CD4-positive, alpha-beta T cell (primary cell): ENCODE measurements at regions of chr2 and their contacts with region 1.

Region 1: GRCh38 chr2:88669371-88670214 is 21.9 kb upstream of the RPIA start:
- DNase-seq: peak in 5 of 14 experiments; percentile 7 to 51 (median 36)
- ATAC-seq: peak; percentile 55
- H3K4me3 ChIP-seq: no peak overlapping the region
- H3K4me3 Mint-ChIP-seq: no peak overlapping the region
- H3K27ac ChIP-seq: no peak overlapping the region
- H3K27ac Mint-ChIP-seq: no peak overlapping the region
- H3K4me1 ChIP-seq: no peaks in the 10 kb centered on the region
- H3K4me1 Mint-ChIP-seq: no peaks in the 10 kb centered on the region
- H3K27me3 ChIP-seq: no peaks in the 10 kb centered on the region
- H3K27me3 Mint-ChIP-seq: no peaks in the 10 kb centered on the region
- CTCF ChIP-seq: peak; percentile 48

Region 2: GRCh38 chr2:88590998-88591613 is 78.5 kb before region 1 on chr2:
- CTCF ChIA-PET with region 1: interaction called, 14 read pairs
- POLR2A ChIA-PET with region 1: no interaction called
- intact Hi-C with region 1: loop called (anchors 1 kb)
- DNase-seq: peak in 8 of 14 experiments; percentile 8 to 72 (median 46)
- ATAC-seq: peak; percentile 76
- H3K4me3 ChIP-seq: no peak overlapping the region
- H3K4me3 Mint-ChIP-seq: no peak overlapping the region
- H3K27ac ChIP-seq: no peak overlapping the region
- H3K27ac Mint-ChIP-seq: no peak overlapping the region
- H3K4me1 ChIP-seq: no peaks in the 10 kb centered on the region
- H3K4me1 Mint-ChIP-seq: peaks cover 4% of the 10 kb centered on the region
- H3K27me3 ChIP-seq: no peaks in the 10 kb centered on the region
- H3K27me3 Mint-ChIP-seq: no peaks in the 10 kb centered on the region
- CTCF ChIP-seq: peak; percentile 80

Region 3: DNA sequence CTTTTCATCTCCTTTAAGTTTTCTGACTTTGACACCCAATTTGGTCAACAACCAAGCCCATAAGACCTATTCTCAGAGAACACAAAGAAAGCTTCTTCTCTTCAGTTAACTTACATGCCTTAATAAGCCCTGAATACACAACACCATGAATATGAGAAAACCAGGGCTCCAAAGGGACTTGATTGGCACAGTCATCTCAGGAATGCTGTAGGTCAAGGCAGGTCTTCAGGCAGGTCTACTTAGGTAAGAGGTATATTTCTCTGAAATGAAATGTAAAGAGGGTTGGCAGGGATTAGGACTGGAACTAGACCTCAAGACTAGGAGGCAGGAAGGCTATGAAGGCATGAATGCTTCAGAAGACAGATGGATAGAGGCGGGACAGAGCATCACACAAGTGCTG is 17.9 kb before region 1 on chr2:
- CTCF ChIA-PET with region 1: interaction called, 11 read pairs
- POLR2A ChIA-PET with region 1: no interaction called
- intact Hi-C with region 1: no loop called
- DNase-seq: no peak
- ATAC-seq: no peak
- H3K4me3 ChIP-seq: no peak overlapping the region
- H3K4me3 Mint-ChIP-seq: no peak overlapping the region
- H3K27ac ChIP-seq: no peak overlapping the region
- H3K27ac Mint-ChIP-seq: no peak overlapping the region
- H3K4me1 ChIP-seq: no peaks in the 10 kb centered on the region
- H3K4me1 Mint-ChIP-seq: no peaks in the 10 kb centered on the region
- H3K27me3 ChIP-seq: no peaks in the 10 kb centered on the region
- H3K27me3 Mint-ChIP-seq: no peaks in the 10 kb centered on the region
- CTCF ChIP-seq: no peak

Region 4: DNA sequence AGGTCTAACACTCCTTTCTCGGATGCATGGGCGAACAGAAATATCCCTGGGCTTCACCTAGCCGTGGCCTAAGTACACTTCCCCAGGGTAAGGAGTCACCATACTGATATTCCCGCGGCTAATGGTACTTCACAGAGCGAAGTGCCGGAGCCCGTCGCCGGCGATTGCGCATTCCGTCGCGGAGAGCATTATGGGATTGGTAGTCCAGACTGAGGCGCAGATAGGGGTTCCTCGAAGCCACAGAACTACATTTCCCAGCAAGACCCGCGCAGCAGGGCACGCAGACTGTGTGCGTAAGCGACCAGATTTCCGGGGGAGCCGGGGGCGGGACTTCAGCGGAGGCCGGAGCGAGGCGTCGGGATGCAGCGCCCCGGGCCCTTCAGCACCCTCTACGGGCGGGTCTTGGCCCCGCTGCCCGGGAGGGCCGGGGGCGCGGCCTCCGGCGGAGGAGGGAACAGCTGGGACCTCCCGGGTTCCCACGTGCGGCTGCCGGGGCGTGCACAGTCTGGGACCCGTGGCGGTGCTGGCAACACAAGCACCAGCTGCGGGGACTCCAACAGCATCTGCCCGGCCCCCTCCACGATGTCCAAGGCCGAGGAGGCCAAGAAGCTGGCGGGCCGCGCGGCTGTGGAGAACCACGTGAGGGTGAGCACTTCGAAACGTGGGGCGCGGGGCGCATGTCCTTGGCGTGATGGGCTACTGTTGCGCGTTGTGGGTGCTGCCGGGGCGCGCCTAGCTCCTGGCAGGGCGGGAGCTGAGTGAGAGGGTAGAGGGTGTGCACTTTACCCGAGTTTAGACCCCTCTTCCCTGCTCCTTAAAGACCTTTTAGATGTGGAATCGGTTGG is 22.0 kb after region 1 on chr2 and contains the start of gene RPIA:
- CTCF ChIA-PET with region 1: interaction called, 23 read pairs
- POLR2A ChIA-PET with region 1: interaction called, 5 read pairs
- intact Hi-C with region 1: no loop called
- DNase-seq: peak; percentile 94 to 100 (median 99)
- ATAC-seq: peak; percentile 94
- H3K4me3 ChIP-seq: peak within 1 kb of the TSS; percentile 77
- H3K4me3 Mint-ChIP-seq: peak within 1 kb of the TSS; percentile 97
- H3K27ac ChIP-seq: peak within 1 kb of the TSS; percentile 78 to 84
- H3K27ac Mint-ChIP-seq: peak within 1 kb of the TSS; percentile 97
- H3K4me1 ChIP-seq: peaks cover 22% of the 10 kb centered on the region
- H3K4me1 Mint-ChIP-seq: peaks cover 70% of the 10 kb centered on the region
- H3K27me3 ChIP-seq: no peaks in the 10 kb centered on the region
- H3K27me3 Mint-ChIP-seq: no peaks in the 10 kb centered on the region
- CTCF ChIP-seq: peak; percentile 57
- total RNA-seq, gene RPIA: 21.6 to 24.7 TPM